ENCODE measurements at regions of chr5 and their contacts with region 1.

Region 1: GRCh38 chr5:64768358-64769312 is at the starts of genes CWC27 and SREK1IP1:
- DNase-seq: peak; percentile 80
- CTCF ChIP-seq: no peak

Region 2: DNA sequence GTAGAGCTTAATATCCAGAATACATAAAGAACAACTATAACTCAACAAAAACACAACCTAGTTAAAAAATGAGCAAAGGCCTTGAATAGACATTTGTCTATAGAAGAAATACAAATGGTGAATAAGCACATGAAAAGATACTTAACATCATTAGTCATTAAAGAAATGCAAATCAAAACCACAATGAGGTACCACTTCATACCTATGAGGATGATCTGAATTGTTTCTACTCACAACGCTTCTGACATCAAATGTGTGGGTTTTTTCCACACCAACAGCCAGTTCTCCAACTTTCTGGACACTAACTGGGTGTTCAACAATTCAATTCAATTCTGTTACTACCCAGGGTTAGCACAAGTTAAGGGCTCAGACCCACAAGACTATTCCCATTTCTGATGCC is 22.2 kb before region 1 on chr5:
- CTCF ChIA-PET with region 1: interaction called, 13 read pairs
- POLR2A ChIA-PET with region 1: no interaction called
- DNase-seq: no peak
- CTCF ChIP-seq: no peak

Region 3: GRCh38 chr5:64784451-64785025 is 15.9 kb after region 1 on chr5:
- CTCF ChIA-PET with region 1: interaction called, 23 read pairs
- POLR2A ChIA-PET with region 1: no interaction called
- DNase-seq: peak; percentile 18
- CTCF ChIP-seq: peak; percentile 87

Region 4: GRCh38 chr5:64822320-64822719 is 53.7 kb after region 1 on chr5:
- CTCF ChIA-PET with region 1: no interaction called
- POLR2A ChIA-PET with region 1: no interaction called
- DNase-seq: no peak
- CTCF ChIP-seq: no peak

Region 5: GRCh38 chr5:65468633-65469032 is 700.0 kb after region 1 on chr5:
- CTCF ChIA-PET with region 1: no interaction called
- POLR2A ChIA-PET with region 1: no interaction called
- DNase-seq: no peak
- CTCF ChIP-seq: no peak

Measured in GM10248 (cell line).